GM12878 (cell line): ENCODE measurements at regions of chr3 and their contacts with region 1.

Region 1: DNA sequence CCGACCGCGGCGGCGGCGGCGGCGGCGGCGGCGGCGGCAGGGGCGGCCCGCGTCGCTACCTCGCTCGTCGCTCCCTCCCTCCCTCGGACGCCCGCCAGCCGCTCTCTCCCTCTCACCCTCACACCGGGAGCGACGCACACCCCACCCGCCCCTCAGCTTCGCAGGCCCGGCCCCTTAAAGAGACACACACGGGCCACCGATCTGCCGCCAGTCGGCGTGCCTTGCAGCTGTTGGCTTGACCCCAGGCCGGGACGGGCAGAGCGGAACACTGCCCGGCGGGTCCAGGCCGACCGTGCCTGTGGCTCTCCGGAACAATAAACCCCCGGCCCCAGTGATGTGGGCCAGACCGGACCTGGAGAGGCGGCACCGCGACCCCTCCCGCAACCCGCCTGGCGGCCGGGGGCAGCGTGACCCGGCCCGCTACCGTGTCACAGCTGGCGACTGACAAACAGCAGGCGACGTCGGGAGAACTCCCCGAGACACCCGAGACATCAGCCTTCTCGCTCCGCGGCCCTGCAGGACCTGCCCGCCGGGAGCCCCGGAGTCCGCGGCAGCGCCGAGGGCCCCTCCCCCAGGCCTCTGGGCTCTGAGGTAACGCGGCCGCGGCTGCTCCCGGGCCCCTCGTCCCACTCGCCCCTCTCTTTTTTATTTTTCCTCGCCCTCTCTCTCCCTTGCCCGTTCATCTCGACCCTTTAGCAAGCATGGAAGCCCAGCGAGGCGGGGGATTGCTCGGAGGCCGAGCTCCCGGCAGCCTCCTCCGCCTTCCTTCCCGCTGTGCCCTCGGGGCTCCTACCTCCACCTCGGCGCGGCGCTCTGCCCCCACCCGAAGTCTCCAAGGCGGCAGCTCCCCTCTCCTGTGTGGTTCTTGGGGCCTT is at the start of gene SETD2:
- DNase-seq: peak; percentile 43
- ATAC-seq: peak; percentile 93
- H3K4me3 ChIP-seq: peak within 1 kb of the TSS; percentile 83
- H3K27ac ChIP-seq: peak within 1 kb of the TSS; percentile 74
- H3K4me1 ChIP-seq: peaks cover 22% of the 10 kb centered on the region
- H3K27me3 ChIP-seq: no peaks in the 10 kb centered on the region
- CTCF ChIP-seq: peak; percentile 54 to 75 (median 59); a peak in 4 of 6 replicates
- EP300 ChIP-seq: no peak
- POLR2A ChIP-seq: peak; percentile 69
- RAD21 ChIP-seq: peak; percentile 82
- polyA plus RNA-seq, gene SETD2: 8.4 to 8.5 TPM

Region 2: DNA sequence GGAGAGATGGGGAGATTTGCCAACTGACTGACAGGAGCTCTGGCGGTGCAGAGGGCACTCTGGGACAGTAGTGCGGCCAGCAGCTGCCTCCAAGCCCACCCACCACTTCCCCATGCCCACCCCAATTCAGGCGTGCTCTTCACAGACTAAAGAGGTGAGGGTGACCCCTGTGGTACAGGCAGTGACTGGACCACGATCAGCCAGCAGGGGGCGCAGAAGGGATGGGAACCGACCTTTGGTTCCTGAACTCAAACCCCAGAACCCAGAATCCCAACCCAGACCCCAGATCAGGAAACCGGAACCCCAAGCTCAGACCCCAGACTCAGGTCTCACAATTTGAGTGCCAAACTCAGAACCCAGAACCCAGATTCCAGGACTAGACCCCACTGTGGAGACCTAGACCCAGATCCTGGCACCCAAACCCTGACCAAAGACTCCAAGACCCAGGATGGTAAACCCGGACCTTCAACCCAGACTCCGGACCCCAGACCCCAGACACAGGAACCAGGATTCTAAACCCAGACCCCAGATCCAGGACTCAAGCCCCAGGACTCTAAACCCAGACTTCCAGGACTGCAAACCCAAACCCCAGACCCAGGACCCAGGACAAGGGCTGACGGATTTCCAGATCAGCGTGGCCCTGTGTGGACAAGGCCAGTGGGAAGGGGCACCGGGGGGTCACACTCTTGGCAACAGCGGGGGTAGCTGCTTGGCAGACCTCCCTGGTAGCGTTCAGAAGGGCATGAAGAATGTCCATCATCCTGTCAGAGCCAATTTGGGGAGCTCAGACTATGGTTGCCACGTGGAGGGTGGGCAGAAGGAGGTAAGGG is 297.3 kb before region 1 on chr3:
- CTCF ChIA-PET with region 1: no interaction called
- POLR2A ChIA-PET with region 1: no interaction called
- RAD21 ChIA-PET with region 1: no interaction called
- SMC1A ChIA-PET with region 1: no interaction called
- in situ Hi-C with region 1: no loop called
- intact Hi-C with region 1: no loop called
- DNase-seq: no peak
- ATAC-seq: peak; percentile 87
- H3K4me3 ChIP-seq: no peak overlapping the region
- H3K27ac ChIP-seq: no peak overlapping the region
- H3K4me1 ChIP-seq: no peaks in the 10 kb centered on the region
- H3K27me3 ChIP-seq: no peaks in the 10 kb centered on the region; a peak in 1 of 4 replicates
- CTCF ChIP-seq: peak; percentile 91 to 92 (median 92)
- EP300 ChIP-seq: no peak
- POLR2A ChIP-seq: no peak
- RAD21 ChIP-seq: peak; percentile 80

Region 3: DNA sequence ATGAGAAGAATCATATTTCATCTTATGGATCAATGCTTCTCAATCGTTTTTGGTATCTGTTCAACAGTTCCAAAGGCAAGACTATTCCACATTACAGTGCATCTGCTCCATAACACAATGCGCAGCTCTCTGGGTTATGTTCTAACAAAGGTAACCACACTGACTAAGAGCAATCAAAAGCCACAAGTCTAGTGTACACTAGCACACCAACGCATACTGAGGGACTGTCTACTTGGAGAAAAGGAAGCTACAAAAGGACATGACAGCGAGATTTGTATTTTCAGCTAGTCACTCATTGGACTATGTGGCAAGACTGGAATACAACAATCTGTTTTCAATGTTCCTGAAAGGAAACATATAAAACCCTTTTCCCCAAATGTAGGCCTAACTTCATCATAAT is 36.1 kb before region 1 on chr3:
- CTCF ChIA-PET with region 1: no interaction called
- POLR2A ChIA-PET with region 1: interaction called, 3 read pairs
- RAD21 ChIA-PET with region 1: interaction called, 8 read pairs
- SMC1A ChIA-PET with region 1: interaction called, 12 read pairs
- in situ Hi-C with region 1: no loop called
- intact Hi-C with region 1: no loop called
- DNase-seq: no peak
- ATAC-seq: no peak
- H3K4me3 ChIP-seq: no peak overlapping the region
- H3K27ac ChIP-seq: no peak overlapping the region
- H3K4me1 ChIP-seq: no peaks in the 10 kb centered on the region
- H3K27me3 ChIP-seq: no peaks in the 10 kb centered on the region
- CTCF ChIP-seq: no peak
- EP300 ChIP-seq: no peak
- POLR2A ChIP-seq: no peak
- RAD21 ChIP-seq: no peak

Region 4: GRCh38 chr3:47152578-47152977 is 11.7 kb before region 1 on chr3:
- CTCF ChIA-PET with region 1: interaction called, 5 read pairs
- POLR2A ChIA-PET with region 1: interaction called, 5 read pairs
- RAD21 ChIA-PET with region 1: interaction called, 4 read pairs
- SMC1A ChIA-PET with region 1: interaction called, 15 read pairs
- in situ Hi-C with region 1: no loop called
- intact Hi-C with region 1: no loop called
- DNase-seq: no peak
- ATAC-seq: peak; percentile 17; the same call in 1 of the 3 replicates
- H3K4me3 ChIP-seq: no peak overlapping the region
- H3K27ac ChIP-seq: no peak overlapping the region
- H3K4me1 ChIP-seq: no peaks in the 10 kb centered on the region
- H3K27me3 ChIP-seq: no peaks in the 10 kb centered on the region
- CTCF ChIP-seq: no peak
- EP300 ChIP-seq: no peak
- POLR2A ChIP-seq: no peak
- RAD21 ChIP-seq: no peak

Region 5: GRCh38 chr3:47250309-47251060 is 86.2 kb after region 1 on chr3:
- CTCF ChIA-PET with region 1: interaction called, 21 read pairs
- POLR2A ChIA-PET with region 1: interaction called, 4 read pairs
- RAD21 ChIA-PET with region 1: interaction called, 12 read pairs
- SMC1A ChIA-PET with region 1: no interaction called
- in situ Hi-C with region 1: no loop called
- intact Hi-C with region 1: no loop called
- DNase-seq: no peak
- ATAC-seq: peak; percentile 77
- H3K4me3 ChIP-seq: no peak overlapping the region
- H3K27ac ChIP-seq: no peak overlapping the region
- H3K4me1 ChIP-seq: no peaks in the 10 kb centered on the region
- H3K27me3 ChIP-seq: no peaks in the 10 kb centered on the region
- CTCF ChIP-seq: peak; percentile 43 to 59 (median 45); a peak in 5 of 6 replicates
- EP300 ChIP-seq: no peak
- POLR2A ChIP-seq: no peak
- RAD21 ChIP-seq: peak; percentile 51; the same call in 1 of the 2 replicates

Region 6: DNA sequence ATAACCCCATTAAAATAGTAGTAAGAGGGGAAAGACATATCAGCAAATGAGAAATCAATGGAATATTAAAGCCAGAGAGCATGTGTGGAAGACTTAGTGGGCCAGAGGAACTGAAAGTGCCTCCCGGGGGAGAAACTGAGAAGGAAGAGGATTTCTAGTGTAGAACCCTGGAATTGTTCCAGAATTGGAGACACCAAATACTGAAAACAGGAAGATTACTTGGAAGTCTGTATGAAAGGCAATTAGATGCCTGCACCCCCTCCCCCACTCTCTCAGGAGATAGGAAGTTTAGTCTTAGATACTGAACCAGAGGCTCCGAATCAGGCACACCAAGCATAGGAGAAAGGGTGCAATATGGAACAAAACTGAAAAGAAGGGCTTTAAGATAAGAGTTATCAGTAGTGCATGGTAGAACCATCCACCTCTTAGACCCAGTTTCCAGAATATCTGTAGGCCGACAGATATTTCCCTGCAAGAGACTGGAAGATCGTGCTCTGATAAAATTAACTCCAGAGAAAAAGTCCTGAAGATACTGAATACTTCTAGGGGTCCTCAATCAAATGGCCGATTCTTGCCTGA is 150.9 kb after region 1 on chr3:
- CTCF ChIA-PET with region 1: interaction called, 82 read pairs
- POLR2A ChIA-PET with region 1: interaction called, 4 read pairs
- RAD21 ChIA-PET with region 1: interaction called, 56 read pairs
- SMC1A ChIA-PET with region 1: interaction called, 42 read pairs
- in situ Hi-C with region 1: no loop called
- intact Hi-C with region 1: loop called (anchors 10 kb)
- DNase-seq: no peak
- ATAC-seq: no peak
- H3K4me3 ChIP-seq: no peak overlapping the region
- H3K27ac ChIP-seq: no peak overlapping the region
- H3K4me1 ChIP-seq: peaks cover 8% of the 10 kb centered on the region; the same call in 1 of the 2 replicates
- H3K27me3 ChIP-seq: no peaks in the 10 kb centered on the region
- CTCF ChIP-seq: no peak
- EP300 ChIP-seq: no peak
- POLR2A ChIP-seq: no peak
- RAD21 ChIP-seq: no peak

Region 7: DNA sequence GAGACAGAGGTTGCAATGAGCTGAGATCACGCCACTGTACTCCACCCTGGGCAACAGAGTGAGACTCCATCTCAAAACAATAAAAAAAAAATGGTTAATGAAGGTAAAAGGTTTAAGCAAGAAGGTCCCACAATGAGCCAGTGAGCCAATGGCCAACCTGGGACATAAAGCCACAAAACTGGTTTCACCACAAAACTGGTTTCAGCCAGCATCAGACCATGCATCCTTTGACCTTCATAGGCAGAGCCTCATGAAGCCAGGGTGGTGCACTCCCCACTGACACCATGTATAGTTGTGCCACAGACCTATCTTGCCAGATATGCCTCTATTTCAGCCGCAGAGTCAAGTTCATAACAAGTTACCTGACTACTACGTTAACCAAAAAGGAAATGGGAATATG is 269.6 kb after region 1 on chr3:
- CTCF ChIA-PET with region 1: no interaction called
- POLR2A ChIA-PET with region 1: no interaction called
- RAD21 ChIA-PET with region 1: no interaction called
- SMC1A ChIA-PET with region 1: no interaction called
- in situ Hi-C with region 1: no loop called
- intact Hi-C with region 1: no loop called
- DNase-seq: no peak
- ATAC-seq: no peak
- H3K4me3 ChIP-seq: no peak overlapping the region
- H3K27ac ChIP-seq: no peak overlapping the region
- H3K4me1 ChIP-seq: no peaks in the 10 kb centered on the region
- H3K27me3 ChIP-seq: no peaks in the 10 kb centered on the region
- CTCF ChIP-seq: no peak
- EP300 ChIP-seq: no peak
- POLR2A ChIP-seq: no peak
- RAD21 ChIP-seq: no peak